ENCODE measurements at regions of chr1 and their contacts with region 1.

Region 1: DNA sequence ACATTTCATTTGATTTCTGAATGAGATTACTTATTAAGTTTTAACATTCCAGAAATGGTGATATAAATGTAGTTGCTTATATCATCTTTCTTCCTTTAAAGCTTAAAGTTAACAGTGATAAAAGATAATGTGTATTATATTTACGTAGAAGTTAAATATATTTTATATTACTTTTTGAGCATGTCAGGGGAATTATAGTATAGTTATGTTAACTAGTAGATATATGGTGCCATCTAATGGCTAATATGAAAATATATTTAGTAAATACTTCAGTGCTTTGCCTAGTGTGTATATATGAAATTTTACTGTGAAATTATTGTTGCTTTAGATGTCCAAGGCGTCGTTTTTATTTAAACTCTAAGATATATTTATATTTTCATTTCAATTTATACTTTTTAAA is 51.5 kb downstream of the SYT14 start:
- DNase-seq: peak; percentile 42
- H3K4me3 Mint-ChIP-seq: no peak overlapping the region
- H3K27ac Mint-ChIP-seq: peak overlapping the region; percentile 70
- H3K4me1 Mint-ChIP-seq: peaks cover 16% of the 10 kb centered on the region
- H3K27me3 Mint-ChIP-seq: peaks cover 15% of the 10 kb centered on the region
- CTCF ChIP-seq: peak; percentile 74

Region 2: DNA sequence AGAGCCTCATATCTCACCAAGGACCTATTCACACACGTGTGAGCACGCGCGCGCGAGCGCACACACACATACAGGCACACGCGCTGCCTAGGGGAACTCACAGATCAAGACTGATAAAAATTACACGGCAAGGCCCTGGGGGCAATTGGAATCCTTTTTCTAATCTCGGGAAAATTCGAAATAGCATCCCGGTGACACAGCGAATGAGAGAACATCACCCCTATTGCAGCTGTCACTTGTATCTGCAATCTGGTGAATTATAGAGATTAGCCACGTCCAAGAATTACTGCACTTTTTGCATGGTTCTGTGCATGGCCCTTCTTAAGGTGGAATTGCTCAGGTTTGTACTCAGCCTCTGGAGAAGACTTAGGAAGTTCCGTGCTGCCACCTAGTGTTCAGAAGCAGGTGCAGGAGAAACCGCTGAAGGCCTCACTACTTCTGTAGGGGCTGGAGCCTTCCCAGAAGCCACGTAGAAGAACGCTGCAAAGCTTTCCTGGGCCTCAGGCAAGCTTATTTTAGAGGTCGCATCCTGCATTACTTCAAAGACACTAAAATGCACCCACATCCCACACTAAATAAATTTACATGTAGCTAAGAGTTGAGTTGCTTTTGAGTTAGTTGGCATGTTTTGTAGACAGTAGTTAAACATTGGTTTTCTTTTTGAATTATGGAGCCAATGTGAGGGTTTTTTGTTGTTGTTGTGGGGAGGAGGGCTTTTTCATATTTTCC is 635.2 kb before region 1 on chr1:
- CTCF ChIA-PET with region 1: no interaction called
- POLR2A ChIA-PET with region 1: no interaction called
- intact Hi-C with region 1: no loop called
- DNase-seq: peak; percentile 99
- H3K4me3 Mint-ChIP-seq: peak overlapping the region; percentile 7
- H3K27ac Mint-ChIP-seq: peak overlapping the region; percentile 78
- H3K4me1 Mint-ChIP-seq: peaks cover 41% of the 10 kb centered on the region
- H3K27me3 Mint-ChIP-seq: no peaks in the 10 kb centered on the region
- CTCF ChIP-seq: peak; percentile 98

Region 3: DNA sequence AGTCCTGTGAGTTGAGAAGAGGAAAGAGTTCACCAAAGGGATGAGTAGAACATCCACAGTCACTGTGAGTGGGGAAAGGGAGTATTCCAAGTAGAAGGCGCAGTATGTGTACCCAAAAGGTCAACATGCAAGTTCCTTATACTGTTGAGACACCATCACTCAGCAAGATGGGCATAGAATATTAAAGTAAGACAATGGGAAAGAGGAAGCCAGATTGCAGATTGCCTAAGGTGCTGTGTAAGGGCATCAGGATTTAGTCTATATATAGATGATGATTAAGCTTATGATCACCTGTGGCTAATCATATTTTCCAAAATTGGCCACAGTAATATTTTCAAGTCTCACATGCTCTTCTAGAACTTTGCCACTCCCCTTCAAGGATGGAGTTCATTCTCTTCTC is 526.1 kb before region 1 on chr1:
- CTCF ChIA-PET with region 1: no interaction called
- POLR2A ChIA-PET with region 1: no interaction called
- intact Hi-C with region 1: no loop called
- DNase-seq: no peak
- H3K4me3 Mint-ChIP-seq: no peak overlapping the region
- H3K27ac Mint-ChIP-seq: no peak overlapping the region
- H3K4me1 Mint-ChIP-seq: no peaks in the 10 kb centered on the region
- H3K27me3 Mint-ChIP-seq: peaks cover 2% of the 10 kb centered on the region
- CTCF ChIP-seq: no peak

Region 4: DNA sequence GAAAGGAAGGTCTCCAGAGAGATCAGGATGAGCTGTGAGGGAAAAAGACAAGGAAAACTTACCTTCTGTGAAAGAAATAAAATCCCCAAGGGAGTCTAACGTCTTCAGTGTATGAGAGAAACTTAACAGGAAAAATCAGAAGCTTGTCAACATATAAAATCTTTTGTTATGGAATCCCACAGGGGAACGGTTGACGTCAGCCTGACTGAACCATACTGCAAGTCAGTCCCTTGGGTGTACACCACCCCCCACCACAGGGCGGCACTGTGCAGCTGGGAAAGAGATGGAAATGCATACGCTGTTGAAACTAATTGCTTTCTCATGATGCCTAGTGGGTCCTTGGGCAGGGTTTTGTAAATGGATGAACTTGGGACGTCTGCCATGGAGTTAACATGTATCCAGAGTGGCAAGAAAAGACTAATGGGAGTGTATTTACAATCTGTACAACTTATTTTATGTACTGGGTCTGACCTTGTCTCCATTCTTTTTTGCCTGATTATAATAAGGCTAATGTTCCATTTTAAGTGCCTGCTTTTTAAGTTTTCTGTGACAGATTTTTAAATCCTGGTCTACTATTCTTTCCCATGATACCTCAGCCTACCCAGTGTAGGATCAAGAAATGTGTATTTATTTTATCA is 139.1 kb before region 1 on chr1:
- CTCF ChIA-PET with region 1: interaction called, 814 read pairs
- POLR2A ChIA-PET with region 1: interaction called, 28 read pairs
- intact Hi-C with region 1: loop called (anchors 1 kb)
- DNase-seq: peak; percentile 80
- H3K4me3 Mint-ChIP-seq: no peak overlapping the region
- H3K27ac Mint-ChIP-seq: peak overlapping the region; percentile 47
- H3K4me1 Mint-ChIP-seq: peaks cover 26% of the 10 kb centered on the region
- H3K27me3 Mint-ChIP-seq: no peaks in the 10 kb centered on the region
- CTCF ChIP-seq: peak; percentile 92

Region 5: GRCh38 chr1:209860293-209860881 is 129.1 kb before region 1 on chr1:
- CTCF ChIA-PET with region 1: interaction called, 814 read pairs
- POLR2A ChIA-PET with region 1: interaction called, 87 read pairs
- intact Hi-C with region 1: loop called (anchors 1 kb)
- DNase-seq: peak; percentile 94
- H3K4me3 Mint-ChIP-seq: no peak overlapping the region
- H3K27ac Mint-ChIP-seq: peak overlapping the region; percentile 73
- H3K4me1 Mint-ChIP-seq: peaks cover 43% of the 10 kb centered on the region
- H3K27me3 Mint-ChIP-seq: no peaks in the 10 kb centered on the region
- CTCF ChIP-seq: peak; percentile 99

Region 6: GRCh38 chr1:209899948-209900347 is 89.6 kb before region 1 on chr1:
- CTCF ChIA-PET with region 1: interaction called, 26 read pairs
- POLR2A ChIA-PET with region 1: interaction called, 5 read pairs
- intact Hi-C with region 1: no loop called
- DNase-seq: peak; percentile 54
- H3K4me3 Mint-ChIP-seq: no peak overlapping the region
- H3K27ac Mint-ChIP-seq: peak overlapping the region; percentile 70
- H3K4me1 Mint-ChIP-seq: peaks cover 45% of the 10 kb centered on the region
- H3K27me3 Mint-ChIP-seq: no peaks in the 10 kb centered on the region
- CTCF ChIP-seq: peak; percentile 36

Region 7: GRCh38 chr1:210001751-210002150 is 12.2 kb after region 1 on chr1:
- CTCF ChIA-PET with region 1: interaction called, 14 read pairs
- POLR2A ChIA-PET with region 1: interaction called, 4 read pairs
- intact Hi-C with region 1: no loop called
- DNase-seq: no peak
- H3K4me3 Mint-ChIP-seq: no peak overlapping the region
- H3K27ac Mint-ChIP-seq: no peak overlapping the region
- H3K4me1 Mint-ChIP-seq: no peaks in the 10 kb centered on the region
- H3K27me3 Mint-ChIP-seq: peaks cover 92% of the 10 kb centered on the region
- CTCF ChIP-seq: no peak

Region 8: GRCh38 chr1:210043058-210043457 is 53.5 kb after region 1 on chr1:
- CTCF ChIA-PET with region 1: no interaction called
- POLR2A ChIA-PET with region 1: no interaction called
- intact Hi-C with region 1: no loop called
- DNase-seq: no peak
- H3K4me3 Mint-ChIP-seq: no peak overlapping the region
- H3K27ac Mint-ChIP-seq: no peak overlapping the region
- H3K4me1 Mint-ChIP-seq: no peaks in the 10 kb centered on the region
- H3K27me3 Mint-ChIP-seq: peaks cover 52% of the 10 kb centered on the region
- CTCF ChIP-seq: no peak